HEK293T (cell line): ENCODE measurements at regions of chr7 and their contacts with region 1.

Region 1: DNA sequence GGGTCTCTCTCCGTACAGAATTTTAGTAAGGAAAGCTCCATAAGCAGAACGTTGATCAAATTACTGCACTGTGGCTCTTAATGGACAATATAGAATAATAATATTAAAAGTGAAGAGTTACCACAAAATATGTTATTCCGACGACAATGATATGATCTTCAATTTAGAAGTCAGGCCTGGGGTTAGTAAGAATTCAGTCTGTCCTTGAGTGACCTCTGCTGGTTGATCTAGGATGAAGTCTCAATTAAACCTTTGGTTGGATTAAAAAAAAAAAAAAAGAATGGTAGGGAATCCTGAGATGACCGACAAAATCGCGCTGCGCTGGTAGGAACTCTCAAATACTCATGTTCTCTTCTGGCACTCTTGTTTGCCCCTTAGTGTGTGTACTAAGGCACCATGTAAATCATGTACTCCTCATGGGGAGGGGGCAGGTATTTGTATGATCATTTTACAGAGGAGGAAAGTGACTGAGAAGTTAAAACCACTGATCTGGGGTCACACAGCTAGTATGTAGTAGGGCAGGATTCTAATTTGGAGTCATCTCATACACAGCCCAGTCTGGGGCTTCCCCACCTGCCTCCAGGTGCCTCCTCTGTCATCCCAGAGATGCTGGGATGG is 161.3 kb upstream of the NPVF start:
- DNase-seq: peak; percentile 50

Region 2: DNA sequence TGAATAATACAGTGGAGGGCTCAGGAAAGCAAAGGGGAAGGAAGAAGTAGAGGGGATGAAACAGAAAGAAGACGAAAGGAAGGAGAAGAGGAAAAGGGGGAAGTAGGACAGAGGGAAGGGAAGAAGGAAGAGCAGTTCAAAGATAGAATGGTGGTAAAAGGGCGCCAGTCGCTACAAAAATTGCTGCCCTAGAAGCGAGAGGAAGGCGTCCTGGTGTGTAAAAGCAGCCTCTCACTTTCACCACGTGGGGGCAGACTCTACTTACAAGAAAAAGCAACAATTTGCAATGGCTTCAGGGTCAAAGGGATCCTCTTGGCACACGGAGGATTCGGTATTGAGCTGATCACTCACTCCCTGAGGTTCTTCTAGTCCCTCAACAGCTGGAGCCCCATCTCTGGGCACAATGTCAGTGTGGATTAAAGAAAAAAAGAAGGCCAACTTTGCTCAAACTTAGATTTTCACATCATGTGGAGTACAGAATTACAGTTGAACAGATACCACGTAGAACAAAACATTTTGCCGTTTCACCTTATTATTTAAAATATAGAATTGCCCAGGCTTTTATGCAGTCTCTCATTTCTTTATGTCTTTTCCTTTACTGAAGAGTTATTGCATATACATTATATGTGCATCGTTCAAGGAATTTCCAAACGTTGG is 129.9 kb before region 1 on chr7:
- CTCF ChIA-PET with region 1: interaction called, 32 read pairs
- POLR2A ChIA-PET with region 1: interaction called, 4 read pairs
- DNase-seq: peak; percentile 73

Region 3: GRCh38 chr7:25565949-25566348 is 176.4 kb after region 1 on chr7:
- CTCF ChIA-PET with region 1: interaction called, 61 read pairs
- POLR2A ChIA-PET with region 1: no interaction called
- DNase-seq: peak; percentile 46